ENCODE measurements at regions of chr6 and their contacts with region 1.

Region 1: DNA sequence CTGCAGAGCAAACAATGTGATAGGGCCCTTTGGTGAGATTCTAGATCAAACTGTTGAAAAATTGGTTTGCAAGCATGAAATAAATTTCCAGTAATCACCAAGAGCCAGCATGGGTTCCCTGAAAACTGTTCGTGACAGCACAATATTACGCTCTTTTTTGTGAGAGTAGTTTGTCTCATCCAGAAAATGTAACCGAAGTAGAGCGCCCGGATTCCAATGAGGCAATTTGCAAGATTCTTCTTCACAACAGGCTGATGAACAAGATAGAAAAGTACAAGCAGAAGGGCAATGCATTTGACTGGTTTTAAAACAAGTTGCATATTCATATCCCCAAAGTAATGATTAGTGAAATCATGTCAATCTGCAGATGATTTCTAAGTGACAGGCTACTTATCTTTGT is 162.0 kb downstream of the CLIC5 start:
- DNase-seq: no peak
- ATAC-seq: no peak
- H3K4me3 ChIP-seq: no peak overlapping the region
- H3K4me1 ChIP-seq: no peaks in the 10 kb centered on the region
- CTCF ChIP-seq: no peak

Region 2: GRCh38 chr6:45822246-45822812 is 31.3 kb before region 1 on chr6:
- intact Hi-C with region 1: loop called in 1 of 2 experiments (anchors 2 kb)
- DNase-seq: no peak
- ATAC-seq: no peak
- H3K4me3 ChIP-seq: no peak overlapping the region
- H3K4me1 ChIP-seq: no peaks in the 10 kb centered on the region
- CTCF ChIP-seq: no peak

Region 3: DNA sequence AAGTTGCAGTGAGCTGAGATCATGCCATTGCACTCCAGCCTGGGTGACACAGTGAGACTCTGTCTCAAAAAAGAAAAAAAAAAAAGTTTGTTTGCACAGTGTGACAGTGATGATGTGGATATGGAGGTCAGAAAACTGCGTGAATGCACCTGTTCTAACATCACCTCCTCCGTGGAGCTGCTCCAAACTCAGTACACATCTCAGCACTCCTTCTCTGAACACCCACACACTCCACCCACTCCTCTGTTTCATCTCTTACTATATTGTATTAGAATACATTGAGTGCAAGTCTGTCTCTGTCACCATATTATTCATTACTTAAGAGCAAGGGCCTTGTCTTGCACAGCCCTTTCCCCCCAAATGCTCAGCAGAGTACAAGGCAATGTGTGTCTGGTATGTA is 224.7 kb after region 1 on chr6:
- intact Hi-C with region 1: no loop called
- DNase-seq: no peak
- ATAC-seq: no peak
- H3K4me3 ChIP-seq: no peak overlapping the region
- H3K4me1 ChIP-seq: no peaks in the 10 kb centered on the region
- CTCF ChIP-seq: no peak

Measured in mucosa of descending colon (tissue), 3 donors.